ENCODE measurements at regions of chr5 and their contacts with region 1.

Region 1: DNA sequence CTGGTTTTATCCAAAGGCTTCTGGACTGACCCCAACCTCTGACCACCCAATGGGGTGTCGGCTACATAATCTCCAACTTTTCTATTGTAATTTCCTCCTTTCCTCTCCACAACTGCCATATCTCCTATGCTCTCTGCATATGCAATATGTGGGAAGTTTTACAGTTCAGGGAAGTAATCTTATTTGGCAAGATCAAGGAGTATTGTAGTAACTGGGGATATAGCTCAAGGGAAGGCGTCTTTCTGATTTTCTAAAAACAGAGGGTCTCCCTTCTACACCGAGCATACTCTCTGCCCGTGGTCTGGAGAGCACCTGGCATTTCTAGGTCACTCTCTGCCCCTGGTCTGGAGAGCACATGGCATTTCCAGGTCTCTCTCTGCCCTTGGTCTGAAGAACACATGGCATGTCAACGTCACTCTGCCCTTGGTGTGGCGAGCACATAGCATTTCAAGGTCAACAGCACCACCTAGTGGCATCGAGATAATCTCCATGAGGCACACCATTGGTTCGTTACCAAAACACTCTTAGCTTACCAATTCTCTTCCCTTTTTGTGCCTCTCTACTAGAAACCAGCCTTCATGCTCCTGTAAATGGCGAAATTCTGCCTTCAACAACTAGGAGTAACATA is 616.4 kb upstream of the NUDT12 start:
- DNase-seq: peak; percentile 71 to 86 (median 75)
- ATAC-seq: peak; percentile 100
- H3K4me3 ChIP-seq: no peak overlapping the region
- H3K27ac ChIP-seq: no peak overlapping the region
- H3K4me1 ChIP-seq: no peaks in the 10 kb centered on the region
- H3K27me3 ChIP-seq: no peaks in the 10 kb centered on the region
- CTCF ChIP-seq: peak; percentile 77 to 85 (median 77)
- EP300 ChIP-seq: no peak
- POLR2A ChIP-seq: no peak
- RAD21 ChIP-seq: peak; percentile 84 to 95

Region 2: DNA sequence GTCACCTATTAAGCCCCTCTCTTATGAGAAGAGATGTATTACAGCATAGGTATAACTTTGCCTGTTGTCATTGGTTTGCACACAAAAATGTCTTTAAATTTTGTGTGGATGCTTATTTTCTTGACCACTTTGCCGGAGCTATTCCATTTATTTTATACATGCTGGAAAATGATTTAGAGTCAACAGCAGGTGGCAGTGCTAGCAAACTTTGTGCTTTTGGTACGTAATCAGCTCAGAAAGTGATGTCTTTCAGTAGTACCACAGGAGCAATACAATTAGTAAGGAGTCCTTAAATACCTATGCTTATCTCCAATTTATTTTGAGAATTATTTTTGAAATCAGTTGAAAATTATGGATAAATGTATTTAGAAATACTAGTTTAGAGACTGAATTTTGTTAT is 596.6 kb before region 1 on chr5:
- CTCF ChIA-PET with region 1: interaction called, 4 read pairs
- POLR2A ChIA-PET with region 1: interaction called, 5 read pairs
- in situ Hi-C with region 1: no loop called
- intact Hi-C with region 1: loop called (anchors 1 kb)
- DNase-seq: peak; percentile 15 to 61 (median 18)
- ATAC-seq: peak; percentile 75
- H3K4me3 ChIP-seq: no peak overlapping the region
- H3K27ac ChIP-seq: no peak overlapping the region
- H3K4me1 ChIP-seq: no peaks in the 10 kb centered on the region
- H3K27me3 ChIP-seq: no peaks in the 10 kb centered on the region
- CTCF ChIP-seq: peak; percentile 33 to 71 (median 56); a peak in 4 of 6 replicates
- EP300 ChIP-seq: no peak
- POLR2A ChIP-seq: no peak
- RAD21 ChIP-seq: peak; percentile 60 to 76

Region 3: GRCh38 chr5:103808464-103809106 is 370.4 kb before region 1 on chr5:
- CTCF ChIA-PET with region 1: interaction called, 10 read pairs
- POLR2A ChIA-PET with region 1: interaction called, 3 read pairs
- in situ Hi-C with region 1: no loop called
- intact Hi-C with region 1: loop called (anchors 1 kb)
- DNase-seq: peak; percentile 12 to 44 (median 24)
- ATAC-seq: peak; percentile 93
- H3K4me3 ChIP-seq: no peak overlapping the region
- H3K27ac ChIP-seq: no peak overlapping the region
- H3K4me1 ChIP-seq: no peaks in the 10 kb centered on the region
- H3K27me3 ChIP-seq: no peaks in the 10 kb centered on the region
- CTCF ChIP-seq: peak; percentile 62 to 84 (median 76)
- EP300 ChIP-seq: no peak
- POLR2A ChIP-seq: no peak
- RAD21 ChIP-seq: peak; percentile 84 to 86

Region 4: GRCh38 chr5:103929338-103930003 is 249.5 kb before region 1 on chr5:
- CTCF ChIA-PET with region 1: no interaction called
- POLR2A ChIA-PET with region 1: no interaction called
- in situ Hi-C with region 1: no loop called
- intact Hi-C with region 1: loop called (anchors 5 kb)
- DNase-seq: no peak
- ATAC-seq: no peak
- H3K4me3 ChIP-seq: no peak overlapping the region
- H3K27ac ChIP-seq: no peak overlapping the region
- H3K4me1 ChIP-seq: no peaks in the 10 kb centered on the region
- H3K27me3 ChIP-seq: no peaks in the 10 kb centered on the region
- CTCF ChIP-seq: no peak
- EP300 ChIP-seq: no peak
- POLR2A ChIP-seq: no peak
- RAD21 ChIP-seq: no peak

Region 5: GRCh38 chr5:106121972-106122605 is 1943.1 kb after region 1 on chr5:
- CTCF ChIA-PET with region 1: no interaction called
- POLR2A ChIA-PET with region 1: no interaction called
- in situ Hi-C with region 1: no loop called
- intact Hi-C with region 1: loop called (anchors 5 kb)
- DNase-seq: peak; percentile 47 to 75 (median 61)
- ATAC-seq: peak; percentile 79
- H3K4me3 ChIP-seq: no peak overlapping the region
- H3K27ac ChIP-seq: no peak overlapping the region
- H3K4me1 ChIP-seq: no peaks in the 10 kb centered on the region
- H3K27me3 ChIP-seq: no peaks in the 10 kb centered on the region
- CTCF ChIP-seq: peak; percentile 59 to 83 (median 63)
- EP300 ChIP-seq: no peak
- POLR2A ChIP-seq: no peak
- RAD21 ChIP-seq: peak in 1 of 2 experiments; percentile 49; a peak in 3 of 4 replicates

Measured in K562 (cell line).